HEK293 (cell line): ENCODE measurements at regions of chr19 and their contacts with region 1.

Region 1: GRCh38 chr19:55407800-55408532 is 378 bp upstream of the UBE2S start:
- H3K4me3 ChIP-seq: peak overlapping the region; percentile 96
- H3K27ac ChIP-seq: peak overlapping the region; percentile 99
- H3K4me1 ChIP-seq: peaks cover 9% of the 10 kb centered on the region
- CTCF ChIP-seq: no peak

Region 2: GRCh38 chr19:55117636-55118391 is 290.2 kb before region 1 on chr19 and contains the start of gene PPP1R12C:
- CTCF ChIA-PET with region 1: no interaction called
- POLR2A ChIA-PET with region 1: interaction called, 13 read pairs
- H3K4me3 ChIP-seq: peak within 1 kb of the TSS; percentile 78
- H3K27ac ChIP-seq: peak within 1 kb of the TSS; percentile 78; the same call in 1 of the 2 replicates
- H3K4me1 ChIP-seq: peaks cover 18% of the 10 kb centered on the region
- CTCF ChIP-seq: 0 out of 2 replicates have a peak, but pooled peaks have one; percentile 29

Region 3: GRCh38 chr19:55216461-55217198 is 191.3 kb before region 1 on chr19:
- CTCF ChIA-PET with region 1: interaction called, 5 read pairs
- POLR2A ChIA-PET with region 1: interaction called, 12 read pairs
- H3K4me3 ChIP-seq: peak overlapping the region; percentile 72
- H3K27ac ChIP-seq: peak overlapping the region; percentile 67
- H3K4me1 ChIP-seq: peaks cover 10% of the 10 kb centered on the region
- CTCF ChIP-seq: no peak

Region 4: GRCh38 chr19:55301459-55302317 is 106.3 kb before region 1 on chr19:
- CTCF ChIA-PET with region 1: interaction called, 3 read pairs
- POLR2A ChIA-PET with region 1: interaction called, 18 read pairs
- H3K4me3 ChIP-seq: peak overlapping the region; percentile 18
- H3K27ac ChIP-seq: no peak overlapping the region; the same call in 1 of the 2 replicates
- H3K4me1 ChIP-seq: peaks cover 3% of the 10 kb centered on the region; the same call in 1 of the 2 replicates
- CTCF ChIP-seq: peak; percentile 93

Region 5: DNA sequence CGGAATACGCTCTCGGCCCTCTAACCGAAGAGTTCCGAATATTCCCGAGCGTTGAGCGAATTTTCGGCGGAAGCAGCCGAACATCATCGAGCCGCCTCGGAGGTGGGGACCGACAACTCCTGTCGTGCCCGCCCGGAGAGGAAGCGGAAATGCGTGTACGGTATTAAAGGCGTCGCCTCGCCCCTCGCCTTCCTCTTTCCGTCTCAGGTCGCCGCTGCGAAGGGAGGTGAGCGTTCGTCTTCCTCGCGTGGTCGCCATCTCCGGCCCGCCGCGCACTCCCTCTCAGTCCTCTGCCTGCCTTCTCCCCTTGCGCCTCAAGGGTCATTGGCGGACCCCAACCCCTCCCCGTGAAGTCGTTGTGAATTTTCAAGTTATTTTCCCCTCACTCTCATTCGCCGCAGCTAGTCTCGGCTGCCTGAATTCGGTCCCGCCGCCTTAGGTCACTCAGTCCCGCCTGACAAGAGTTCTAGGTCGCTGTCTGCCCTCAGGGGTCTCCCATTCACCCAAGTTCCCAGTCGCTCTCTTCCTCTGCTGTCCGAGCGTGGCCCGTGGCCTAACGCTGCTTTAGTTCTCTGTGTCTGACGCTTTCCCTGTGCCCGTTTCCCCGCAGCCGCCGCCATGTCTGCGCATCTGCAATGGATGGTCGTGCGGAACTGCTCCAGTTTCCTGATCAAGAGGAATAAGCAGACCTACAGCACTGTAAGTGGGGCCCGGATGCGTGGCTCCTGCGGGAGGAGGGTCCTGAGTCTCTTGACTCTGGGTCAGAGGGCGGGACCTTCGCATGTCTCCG is 22.0 kb before region 1 on chr19 and contains the start of gene RPL28:
- CTCF ChIA-PET with region 1: no interaction called
- POLR2A ChIA-PET with region 1: interaction called, 78 read pairs
- H3K4me3 ChIP-seq: peak within 1 kb of the TSS; percentile 94
- H3K27ac ChIP-seq: peak within 1 kb of the TSS; percentile 84
- H3K4me1 ChIP-seq: peaks cover 27% of the 10 kb centered on the region
- CTCF ChIP-seq: 0 out of 2 replicates have a peak, but pooled peaks have one; percentile 31

Region 6: DNA sequence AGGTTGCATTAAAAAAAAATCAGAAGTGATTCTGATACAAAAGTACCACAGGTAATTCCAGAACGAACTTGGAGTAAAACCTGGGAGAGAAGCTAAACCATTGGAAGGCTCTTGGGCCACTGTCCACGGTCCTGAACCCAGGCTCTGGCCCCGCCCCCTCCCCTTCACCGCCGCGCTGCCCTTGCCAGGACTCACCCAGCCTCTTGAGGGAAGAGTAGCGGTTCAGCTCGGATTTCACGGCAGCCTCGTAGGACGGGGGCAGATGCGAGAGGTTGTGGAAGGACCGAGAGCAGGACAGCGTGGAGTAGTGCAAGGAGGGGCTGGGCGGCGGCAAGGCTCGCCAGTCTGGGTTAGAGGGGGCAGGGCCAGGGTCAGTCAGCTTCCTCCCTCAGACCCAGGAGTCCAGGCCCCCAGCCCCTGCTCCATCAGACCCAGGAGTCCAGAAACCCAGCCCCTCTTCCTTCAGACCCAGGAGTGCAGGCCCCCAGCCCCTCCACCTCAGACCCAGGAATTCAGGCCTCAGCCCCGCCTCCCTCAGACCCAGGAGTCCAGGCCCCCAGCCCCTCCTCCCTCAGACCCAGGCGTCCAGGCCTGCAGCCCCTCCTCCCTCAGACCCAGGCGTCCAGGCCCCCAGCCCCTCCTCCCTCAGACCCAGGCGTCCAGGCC is 29.6 kb after region 1 on chr19:
- CTCF ChIA-PET with region 1: no interaction called
- POLR2A ChIA-PET with region 1: interaction called, 13 read pairs
- H3K4me3 ChIP-seq: no peak overlapping the region
- H3K27ac ChIP-seq: no peak overlapping the region
- H3K4me1 ChIP-seq: peaks cover 3% of the 10 kb centered on the region; the same call in 1 of the 2 replicates
- CTCF ChIP-seq: no peak

Region 7: DNA sequence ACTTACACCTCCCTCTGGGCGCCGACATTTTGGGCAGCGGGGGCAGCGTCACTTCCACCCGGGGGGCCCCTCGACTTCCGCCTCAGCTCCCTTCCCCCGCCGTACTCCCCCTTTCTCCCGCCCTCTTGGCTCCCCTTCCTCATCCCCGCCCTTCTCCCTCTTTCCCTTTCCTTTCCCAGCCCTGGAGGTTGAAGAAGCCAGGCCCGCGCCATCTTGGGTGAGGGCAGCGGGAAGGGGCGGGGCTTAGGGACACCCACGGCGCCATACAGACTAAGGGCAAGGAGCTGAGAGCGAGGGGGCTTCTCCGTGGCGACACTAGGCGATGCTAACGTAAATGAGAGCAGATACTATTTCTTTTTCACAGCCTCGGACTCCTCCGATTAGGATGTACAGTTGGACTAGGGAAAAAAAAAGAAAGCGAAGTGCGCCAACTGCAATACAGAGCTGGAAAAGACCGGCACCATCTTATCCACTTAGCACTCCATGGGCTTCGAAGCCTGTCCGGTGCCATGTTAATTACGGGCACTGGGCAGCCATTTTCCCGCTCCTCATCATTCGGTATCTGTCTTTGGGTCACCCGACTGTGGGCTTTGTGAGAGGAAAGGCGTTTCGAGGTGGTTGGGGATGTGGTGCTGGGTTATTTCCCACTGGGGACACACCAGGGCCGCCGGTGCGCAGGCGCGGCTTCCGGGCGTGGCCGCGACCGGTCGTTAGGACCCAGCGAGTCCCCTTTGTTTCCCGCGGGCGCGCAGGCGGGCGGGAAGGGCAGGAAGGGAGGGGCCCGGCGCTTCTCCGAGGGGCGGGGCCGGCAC is 191.7 kb after region 1 on chr19 and contains the start of gene FIZ1:
- CTCF ChIA-PET with region 1: no interaction called
- POLR2A ChIA-PET with region 1: interaction called, 13 read pairs
- H3K4me3 ChIP-seq: peak within 1 kb of the TSS; percentile 97
- H3K27ac ChIP-seq: peak within 1 kb of the TSS; percentile 97
- H3K4me1 ChIP-seq: peaks cover 3% of the 10 kb centered on the region; the same call in 1 of the 2 replicates
- CTCF ChIP-seq: no peak; the same call in 1 of the 2 replicates